Activated CD4-positive, alpha-beta memory T cell treated with anti-CD3 and anti-CD28 coated beads, Interleukin-2, amount 10 ng/mL, durations not matched to agents 7 days and 5 days (primary cell): ENCODE measurements at regions of chr18 and their contacts with region 1.

Region 1: GRCh38 chr18:63155169-63155852 is 164.3 kb downstream of the BCL2 start:
- DNase-seq: peak; percentile 77
- H3K4me3 Mint-ChIP-seq: peak overlapping the region; percentile 76
- H3K27ac Mint-ChIP-seq: peak overlapping the region; percentile 95
- H3K4me1 Mint-ChIP-seq: peaks cover 97% of the 10 kb centered on the region
- H3K27me3 Mint-ChIP-seq: no peaks in the 10 kb centered on the region

Region 2: DNA sequence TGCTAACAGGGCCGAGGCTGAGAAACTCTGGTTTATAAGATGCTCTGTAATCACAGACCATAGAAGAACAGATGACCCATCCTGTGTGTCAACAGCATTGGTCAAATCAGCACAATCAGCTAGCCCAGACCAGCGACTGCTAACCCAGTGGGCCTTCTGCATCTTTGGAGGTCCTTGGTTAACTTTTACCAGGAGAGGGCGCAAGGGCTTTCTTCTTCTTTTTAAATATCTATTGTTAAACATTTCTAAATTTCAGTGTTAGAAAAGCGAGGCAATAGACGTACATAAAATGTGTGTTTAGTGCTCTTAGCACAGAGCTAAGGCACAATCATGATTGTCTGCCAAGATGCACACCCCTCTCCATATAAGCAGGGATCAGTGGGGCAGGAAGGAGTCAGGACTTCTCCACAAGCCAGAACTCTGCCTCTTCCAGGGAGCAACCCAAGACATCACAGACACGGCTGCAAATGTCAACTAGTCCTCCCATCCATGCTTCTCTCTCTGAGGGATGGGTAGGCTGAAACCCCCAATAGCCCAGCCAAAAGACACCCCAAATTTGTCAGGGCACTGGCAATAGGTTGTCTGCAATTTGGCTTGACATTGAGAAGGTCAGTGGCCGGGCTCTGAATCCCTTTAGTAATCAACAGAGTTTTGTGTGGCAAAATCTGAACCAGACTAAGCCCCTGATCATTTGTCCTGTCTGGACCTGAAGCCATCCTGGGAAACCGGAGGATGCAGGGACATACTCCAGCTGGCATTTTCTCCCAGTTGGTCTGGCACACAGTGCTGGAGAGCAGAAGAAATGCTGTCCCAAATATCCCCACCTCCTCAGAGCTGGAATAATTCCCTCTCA is 24.0 kb before region 1 on chr18:
- CTCF ChIA-PET with region 1: interaction called, 14 read pairs
- POLR2A ChIA-PET with region 1: interaction called, 6 read pairs
- DNase-seq: peak; percentile 59
- H3K4me3 Mint-ChIP-seq: no peak overlapping the region
- H3K27ac Mint-ChIP-seq: no peak overlapping the region
- H3K4me1 Mint-ChIP-seq: peaks cover 37% of the 10 kb centered on the region
- H3K27me3 Mint-ChIP-seq: no peaks in the 10 kb centered on the region

Region 3: DNA sequence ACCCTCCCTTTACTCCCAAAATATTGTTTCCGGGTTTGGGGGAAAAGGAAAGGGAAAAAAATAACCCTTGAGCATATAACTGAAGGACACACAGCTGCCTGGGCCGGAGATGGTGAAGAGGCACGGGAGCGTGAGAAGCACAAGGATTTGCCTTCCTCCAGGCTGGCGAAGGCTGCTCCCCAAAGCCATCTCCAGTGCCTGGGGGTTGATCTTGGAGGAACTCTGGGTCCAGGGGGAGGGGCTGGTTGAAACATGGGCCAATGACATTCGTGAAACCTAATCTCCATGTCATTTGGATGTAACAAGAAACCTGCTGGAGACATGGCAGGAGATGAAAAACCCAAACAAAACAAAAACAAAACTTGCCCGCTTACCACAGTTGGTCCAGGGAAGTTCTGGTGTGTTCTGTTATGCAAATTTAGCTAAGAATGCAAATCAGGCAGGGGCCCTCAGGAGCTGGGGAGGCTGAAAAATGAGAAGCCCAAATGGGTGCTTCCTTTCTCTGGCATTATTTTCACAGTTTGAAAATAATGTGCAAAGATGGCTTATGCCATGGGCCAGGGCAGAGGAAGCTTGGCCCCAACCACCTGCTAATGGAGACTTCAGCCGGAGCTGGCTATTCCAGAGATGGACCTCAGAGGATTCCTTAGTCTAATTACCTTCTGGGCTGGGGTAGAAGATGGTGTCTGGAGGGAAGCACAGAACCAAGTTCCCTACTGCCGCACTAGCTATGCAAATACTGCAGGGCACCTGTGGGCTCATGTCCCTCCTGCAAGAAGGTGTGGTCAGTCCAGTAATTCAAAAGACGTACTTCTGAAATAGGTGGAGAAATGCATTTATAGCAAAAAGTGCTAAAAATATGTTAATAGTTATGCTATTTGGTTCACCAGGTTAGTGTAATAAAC is 16.6 kb before region 1 on chr18:
- CTCF ChIA-PET with region 1: interaction called, 18 read pairs
- POLR2A ChIA-PET with region 1: interaction called, 50 read pairs
- DNase-seq: no peak
- H3K4me3 Mint-ChIP-seq: peak overlapping the region; percentile 72
- H3K27ac Mint-ChIP-seq: peak overlapping the region; percentile 86
- H3K4me1 Mint-ChIP-seq: peaks cover 68% of the 10 kb centered on the region
- H3K27me3 Mint-ChIP-seq: no peaks in the 10 kb centered on the region

Region 4: DNA sequence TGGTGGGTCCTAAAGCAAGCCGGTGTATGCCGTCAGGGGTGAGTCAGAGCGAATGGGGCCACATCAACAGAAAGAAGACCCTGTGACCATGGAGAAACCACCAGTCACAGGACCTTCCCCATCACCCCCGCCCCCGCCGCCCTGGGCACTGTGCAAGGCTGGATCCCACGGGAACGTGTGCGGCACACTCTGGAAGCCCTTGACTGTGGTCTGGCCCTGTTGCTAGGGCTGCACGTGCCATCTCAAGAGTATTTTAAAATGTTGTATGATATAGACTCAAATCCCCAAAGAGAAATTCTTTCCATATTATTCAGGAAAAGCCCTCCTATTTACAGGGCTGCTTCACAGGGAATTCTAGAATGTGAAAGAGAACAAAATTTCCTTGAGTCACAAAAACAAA is 10.6 kb before region 1 on chr18:
- CTCF ChIA-PET with region 1: interaction called, 18 read pairs
- POLR2A ChIA-PET with region 1: interaction called, 50 read pairs
- DNase-seq: no peak
- H3K4me3 Mint-ChIP-seq: no peak overlapping the region
- H3K27ac Mint-ChIP-seq: no peak overlapping the region
- H3K4me1 Mint-ChIP-seq: peaks cover 32% of the 10 kb centered on the region
- H3K27me3 Mint-ChIP-seq: no peaks in the 10 kb centered on the region

Region 5: GRCh38 chr18:63199743-63200241 is 44.5 kb after region 1 on chr18:
- CTCF ChIA-PET with region 1: interaction called, 5 read pairs
- POLR2A ChIA-PET with region 1: interaction called, 62 read pairs
- DNase-seq: peak; percentile 59
- H3K4me3 Mint-ChIP-seq: no peak overlapping the region
- H3K27ac Mint-ChIP-seq: no peak overlapping the region
- H3K4me1 Mint-ChIP-seq: peaks cover 48% of the 10 kb centered on the region
- H3K27me3 Mint-ChIP-seq: no peaks in the 10 kb centered on the region

Region 6: DNA sequence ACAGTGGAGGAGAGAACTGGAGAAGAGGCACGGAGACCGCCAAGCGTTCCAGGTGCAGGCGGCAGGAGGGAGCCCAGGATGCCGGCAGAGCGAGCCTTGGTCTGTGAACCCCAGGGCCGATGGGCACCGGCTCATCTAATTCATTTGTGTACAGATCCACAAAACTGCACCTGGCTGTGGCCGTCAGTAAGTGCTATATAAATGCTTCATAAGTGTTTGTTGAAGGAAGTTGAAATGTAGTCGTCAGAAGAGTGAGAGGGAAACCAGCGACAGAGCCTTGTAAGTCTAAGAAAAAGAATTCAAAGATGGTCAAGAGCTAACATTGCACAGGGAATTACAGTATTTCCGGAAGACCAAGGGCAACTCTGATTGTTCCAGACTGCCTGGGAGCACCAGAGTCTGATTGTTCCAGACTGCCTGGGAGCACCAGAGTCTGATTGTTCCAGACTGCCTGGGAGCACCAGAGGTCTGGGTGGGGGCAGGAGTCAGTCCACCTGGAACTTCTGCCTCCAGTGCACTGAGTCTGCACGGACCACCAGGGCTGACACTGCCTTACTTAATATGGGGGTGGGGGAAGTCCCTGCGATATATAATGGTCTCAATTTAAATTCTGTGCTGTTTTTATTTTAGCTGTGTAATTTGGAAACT is 52.0 kb after region 1 on chr18:
- CTCF ChIA-PET with region 1: interaction called, 5 read pairs
- POLR2A ChIA-PET with region 1: interaction called, 62 read pairs
- DNase-seq: no peak
- H3K4me3 Mint-ChIP-seq: peak overlapping the region; percentile 81
- H3K27ac Mint-ChIP-seq: peak overlapping the region; percentile 94
- H3K4me1 Mint-ChIP-seq: peaks cover 93% of the 10 kb centered on the region
- H3K27me3 Mint-ChIP-seq: no peaks in the 10 kb centered on the region

Region 7: DNA sequence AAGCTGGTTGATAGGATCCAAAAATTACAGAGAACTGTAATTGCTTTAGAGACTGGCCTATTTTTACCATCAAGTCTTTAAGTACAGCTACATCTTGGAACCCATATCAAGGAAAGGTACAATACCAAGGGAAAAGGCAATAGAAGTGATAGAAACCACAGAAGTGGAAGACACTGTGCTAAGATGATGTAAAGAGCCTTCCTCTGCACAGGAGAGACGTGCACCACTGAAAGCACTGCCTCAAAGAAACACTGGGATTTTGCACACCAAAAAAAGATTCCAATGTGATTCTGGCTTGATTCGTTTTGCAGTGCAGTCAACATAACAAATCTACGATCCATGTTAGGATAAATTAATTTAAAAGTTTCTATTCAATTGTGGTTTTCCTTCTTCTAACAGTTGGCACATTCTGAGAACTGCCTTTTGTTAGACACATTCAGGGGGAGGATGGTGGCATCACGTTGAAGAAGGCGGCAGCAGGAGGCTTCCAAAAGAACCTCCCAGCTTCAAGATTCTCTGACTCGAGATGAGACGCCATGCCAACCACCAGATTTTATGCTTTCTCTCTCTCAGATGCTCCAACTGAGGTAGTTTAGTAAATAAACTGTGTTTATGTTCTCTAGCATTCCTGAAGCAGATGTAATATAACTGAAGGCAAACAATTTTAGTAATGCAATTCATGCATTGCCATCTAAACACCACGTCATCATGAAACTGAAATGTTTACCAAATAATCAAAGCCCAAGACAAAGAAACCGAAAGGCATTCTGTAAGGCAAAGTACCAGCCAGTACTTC is 61.4 kb after region 1 on chr18:
- CTCF ChIA-PET with region 1: interaction called, 3 read pairs
- POLR2A ChIA-PET with region 1: interaction called, 27 read pairs
- DNase-seq: peak; percentile 49
- H3K4me3 Mint-ChIP-seq: peak overlapping the region; percentile 64
- H3K27ac Mint-ChIP-seq: peak overlapping the region; percentile 93
- H3K4me1 Mint-ChIP-seq: peaks cover 95% of the 10 kb centered on the region
- H3K27me3 Mint-ChIP-seq: no peaks in the 10 kb centered on the region